ENCODE measurements at regions of chr6 and their contacts with region 1.

Region 1: DNA sequence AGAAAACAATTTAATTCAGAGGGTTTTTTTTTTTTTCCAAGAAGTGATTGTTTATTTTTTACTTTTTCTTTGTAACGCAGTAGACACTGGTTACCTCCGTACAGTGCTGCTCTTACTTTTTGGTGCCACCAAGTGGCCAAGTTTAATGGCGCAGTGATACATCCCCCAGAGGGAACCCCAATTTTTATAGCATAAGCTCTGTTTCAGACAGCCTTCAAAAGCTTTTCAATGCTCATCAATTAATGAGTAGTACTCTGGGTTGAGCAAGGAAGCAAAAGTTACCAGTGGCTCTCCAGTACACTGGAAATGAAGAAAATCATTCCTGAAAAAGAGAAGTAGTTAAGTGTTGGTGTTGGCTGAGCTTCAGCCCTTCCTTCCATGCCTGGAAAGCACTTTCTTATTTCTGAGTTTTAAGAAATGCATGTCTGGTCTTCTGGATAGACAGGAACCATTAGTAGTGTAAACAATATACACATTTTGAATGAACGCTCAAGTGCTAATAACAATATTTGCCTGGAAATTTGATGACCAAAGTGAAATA is 129.1 kb upstream of the SMLR1 start:
- DNase-seq: peak; percentile 80
- H3K4me3 Mint-ChIP-seq: no peak overlapping the region
- H3K27ac Mint-ChIP-seq: peak overlapping the region; percentile 78
- H3K4me1 Mint-ChIP-seq: peaks cover 46% of the 10 kb centered on the region
- H3K27me3 Mint-ChIP-seq: peaks cover 2% of the 10 kb centered on the region

Region 2: DNA sequence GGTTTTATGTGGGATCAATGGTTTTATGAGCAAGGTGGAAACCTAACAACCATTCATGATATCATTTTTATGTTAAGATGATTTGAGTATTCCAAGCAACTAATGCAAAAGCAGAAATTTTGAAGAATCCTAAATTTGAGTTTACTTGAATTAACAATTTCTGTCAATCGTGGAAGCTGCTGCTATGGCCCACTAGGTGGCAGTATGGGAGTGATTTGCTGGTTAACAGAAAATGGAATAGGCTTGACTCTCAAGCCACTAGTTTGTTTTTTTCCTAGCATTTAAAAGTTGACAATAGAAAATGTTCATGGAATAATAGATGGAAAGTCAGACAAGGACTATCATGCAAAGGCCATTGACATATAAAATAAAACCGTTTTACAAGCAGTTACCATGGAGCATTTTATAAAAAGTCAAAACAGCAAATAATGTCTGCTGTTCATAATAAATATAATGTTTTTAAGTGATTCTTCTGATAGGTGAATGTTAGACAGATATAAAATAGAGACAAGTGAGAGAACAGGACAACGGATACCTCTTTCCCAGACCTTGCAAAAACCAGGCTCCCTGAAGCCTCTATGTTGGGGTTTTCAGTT is 375.3 kb before region 1 on chr6:
- CTCF ChIA-PET with region 1: interaction called, 12 read pairs
- POLR2A ChIA-PET with region 1: no interaction called
- DNase-seq: peak; percentile 66
- H3K4me3 Mint-ChIP-seq: no peak overlapping the region
- H3K27ac Mint-ChIP-seq: no peak overlapping the region
- H3K4me1 Mint-ChIP-seq: peaks cover 11% of the 10 kb centered on the region
- H3K27me3 Mint-ChIP-seq: peaks cover 15% of the 10 kb centered on the region

Region 3: GRCh38 chr6:130537447-130537846 is 160.6 kb before region 1 on chr6:
- CTCF ChIA-PET with region 1: no interaction called
- POLR2A ChIA-PET with region 1: no interaction called
- DNase-seq: peak; percentile 25
- H3K4me3 Mint-ChIP-seq: no peak overlapping the region
- H3K27ac Mint-ChIP-seq: peak overlapping the region; percentile 57
- H3K4me1 Mint-ChIP-seq: peaks cover 13% of the 10 kb centered on the region
- H3K27me3 Mint-ChIP-seq: no peaks in the 10 kb centered on the region

Region 4: GRCh38 chr6:130716466-130716865 is 18.4 kb after region 1 on chr6:
- CTCF ChIA-PET with region 1: interaction called, 11 read pairs
- POLR2A ChIA-PET with region 1: no interaction called
- DNase-seq: no peak
- H3K4me3 Mint-ChIP-seq: no peak overlapping the region
- H3K27ac Mint-ChIP-seq: no peak overlapping the region
- H3K4me1 Mint-ChIP-seq: peaks cover 33% of the 10 kb centered on the region
- H3K27me3 Mint-ChIP-seq: no peaks in the 10 kb centered on the region

Measured in activated CD4-positive, alpha-beta T cell treated with anti-CD3 and anti-CD28 coated beads, Interleukin-2, amount 10 ng/mL, durations not matched to agents 7 days and 5 days (primary cell).